ENCODE measurements at regions of chr17 and their contacts with region 1.

Region 1: DNA sequence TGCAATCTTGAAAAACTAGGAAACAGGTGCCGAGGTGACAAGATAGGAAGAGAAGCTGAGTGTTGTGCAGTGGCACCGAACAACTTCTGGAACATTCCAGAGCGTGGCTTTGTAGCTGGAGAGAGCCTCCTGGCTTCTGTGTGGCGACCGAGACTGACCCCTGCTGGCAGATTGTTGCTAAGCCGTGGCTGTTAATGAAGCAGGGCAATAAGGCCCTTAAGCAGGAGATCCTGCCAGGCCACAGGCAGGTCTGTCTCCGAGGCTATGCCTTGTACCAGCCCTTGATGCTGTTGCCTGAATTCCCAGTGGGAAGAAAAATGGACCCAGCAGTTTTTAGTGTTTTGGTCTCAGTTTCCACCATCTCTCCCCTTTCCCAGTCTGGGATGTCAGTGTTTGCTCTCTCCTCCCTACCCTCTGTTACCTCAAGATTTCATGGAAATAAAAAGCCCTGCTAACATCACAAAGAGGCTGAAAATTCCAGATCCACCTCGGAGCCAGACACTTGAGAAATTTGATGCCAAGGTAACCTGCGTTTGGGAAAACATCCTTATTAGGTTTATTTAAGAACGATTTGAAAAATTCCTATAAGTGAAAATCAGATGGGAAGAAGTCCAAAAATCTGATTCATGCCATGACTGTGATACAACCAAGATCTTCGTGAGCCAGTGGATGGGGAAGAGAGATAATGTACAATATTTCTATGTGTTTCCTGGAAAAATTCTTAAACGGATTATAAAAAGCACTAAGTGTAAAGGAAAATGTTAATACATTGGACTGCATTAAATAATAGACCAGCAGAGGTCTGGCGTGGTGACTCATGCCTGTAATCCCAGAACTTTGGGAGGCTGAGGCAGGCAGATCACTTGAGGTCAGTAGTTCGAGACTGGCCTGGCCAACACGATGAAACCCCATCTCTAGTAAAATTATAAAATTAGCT is 265.1 kb downstream of the PRKCA start:
- DNase-seq: peak; percentile 88
- H3K4me3 ChIP-seq: no peak overlapping the region
- H3K27ac ChIP-seq: peak overlapping the region; percentile 77
- H3K4me1 ChIP-seq: peaks cover 29% of the 10 kb centered on the region
- H3K27me3 ChIP-seq: no peaks in the 10 kb centered on the region

Region 2: DNA sequence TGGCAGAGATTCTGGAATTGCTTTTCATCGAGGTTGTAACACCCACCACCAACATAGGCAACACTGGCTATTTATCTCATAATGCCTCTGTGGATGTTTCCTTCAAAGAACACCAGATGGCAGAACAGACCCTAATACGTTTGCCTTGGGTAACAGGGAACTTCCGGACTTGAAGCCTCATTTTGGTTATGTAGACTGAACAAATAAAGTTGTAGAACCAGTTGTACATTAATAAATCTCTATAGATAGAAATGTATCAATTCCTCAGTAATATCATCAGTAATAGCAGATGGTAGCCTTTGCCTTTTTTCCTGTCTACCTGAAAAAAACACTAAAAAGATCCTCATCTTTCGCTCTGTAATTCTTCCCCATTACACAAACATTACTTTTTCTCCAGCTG is 312.4 kb before region 1 on chr17:
- in situ Hi-C with region 1: loop called (anchors 25 kb)
- DNase-seq: peak; percentile 88
- H3K4me3 ChIP-seq: no peak overlapping the region
- H3K27ac ChIP-seq: no peak overlapping the region
- H3K4me1 ChIP-seq: no peaks in the 10 kb centered on the region
- H3K27me3 ChIP-seq: no peaks in the 10 kb centered on the region

Region 3: GRCh38 chr17:66459811-66460270 is 107.7 kb before region 1 on chr17:
- in situ Hi-C with region 1: no loop called
- DNase-seq: peak; percentile 99
- H3K4me3 ChIP-seq: peak overlapping the region; percentile 44
- H3K27ac ChIP-seq: peak overlapping the region; percentile 96
- H3K4me1 ChIP-seq: peaks cover 38% of the 10 kb centered on the region
- H3K27me3 ChIP-seq: no peaks in the 10 kb centered on the region

Region 4: DNA sequence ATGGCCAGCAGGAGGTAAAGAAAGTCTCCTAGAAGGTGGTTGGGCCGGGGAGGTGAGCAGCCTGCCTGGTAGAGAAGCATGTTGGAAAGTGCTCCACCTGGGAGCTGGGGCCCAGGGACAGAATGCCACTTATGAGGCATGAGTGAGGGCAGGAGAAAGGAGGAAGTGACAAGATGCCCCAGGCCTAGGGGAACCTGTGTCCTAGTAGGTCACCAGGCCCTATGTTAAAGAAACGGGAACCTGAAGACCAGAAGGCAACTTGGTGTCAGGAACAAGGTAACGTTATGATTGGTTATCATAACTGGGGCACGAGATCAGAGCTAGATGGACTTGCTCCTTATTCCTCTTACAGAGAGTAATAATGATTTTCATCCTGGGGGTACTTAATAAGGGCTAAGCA is 843.9 kb after region 1 on chr17:
- in situ Hi-C with region 1: no loop called
- DNase-seq: no peak
- H3K4me3 ChIP-seq: no peak overlapping the region
- H3K27ac ChIP-seq: no peak overlapping the region
- H3K4me1 ChIP-seq: no peaks in the 10 kb centered on the region
- H3K27me3 ChIP-seq: no peaks in the 10 kb centered on the region